Aorta (tissue), 5 donors: ENCODE measurements at regions of chr17 and their contacts with region 1.

Region 1: DNA sequence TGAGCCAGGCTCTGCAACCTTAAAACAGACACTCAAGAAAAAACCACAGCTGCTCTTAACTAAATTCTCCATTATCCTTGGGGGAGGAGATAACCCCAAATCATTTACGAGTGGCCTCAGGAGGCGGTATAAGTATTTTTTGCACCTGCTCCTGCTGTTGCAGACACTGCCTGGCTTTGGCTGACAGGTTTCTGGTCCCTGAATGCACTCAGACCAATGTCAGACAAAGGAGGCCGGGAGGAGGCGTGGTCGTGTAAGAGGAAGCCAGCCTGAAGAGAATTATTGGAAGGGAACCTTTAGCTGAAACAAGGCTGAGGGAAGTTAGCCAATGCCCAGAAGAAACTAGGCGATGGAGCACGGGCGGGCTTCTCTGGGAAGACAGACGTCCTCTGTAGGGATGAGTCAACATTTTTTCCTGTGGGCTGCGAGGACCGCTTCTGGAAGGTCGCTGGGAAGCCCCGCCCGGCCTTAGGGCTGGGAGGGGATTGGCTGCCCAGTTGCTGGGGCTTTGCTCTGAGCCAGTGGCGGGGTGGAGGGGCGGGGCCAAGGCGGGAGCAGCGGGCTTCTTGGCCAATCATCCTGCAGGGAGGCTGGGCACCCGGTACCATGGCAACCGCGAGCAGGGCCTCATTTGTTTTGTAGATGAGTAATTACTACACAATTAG is 82.3 kb downstream of the CCDC182 start:
- DNase-seq: peak; percentile 97 to 99
- ATAC-seq: peak; percentile 97
- H3K4me3 ChIP-seq: no peak overlapping the region
- H3K27ac ChIP-seq: peak overlapping the region in 1 of 2 donors; percentile 26
- H3K4me1 ChIP-seq: no peaks in the 10 kb centered on the region
- H3K27me3 ChIP-seq: no peaks in the 10 kb centered on the region

Region 2: DNA sequence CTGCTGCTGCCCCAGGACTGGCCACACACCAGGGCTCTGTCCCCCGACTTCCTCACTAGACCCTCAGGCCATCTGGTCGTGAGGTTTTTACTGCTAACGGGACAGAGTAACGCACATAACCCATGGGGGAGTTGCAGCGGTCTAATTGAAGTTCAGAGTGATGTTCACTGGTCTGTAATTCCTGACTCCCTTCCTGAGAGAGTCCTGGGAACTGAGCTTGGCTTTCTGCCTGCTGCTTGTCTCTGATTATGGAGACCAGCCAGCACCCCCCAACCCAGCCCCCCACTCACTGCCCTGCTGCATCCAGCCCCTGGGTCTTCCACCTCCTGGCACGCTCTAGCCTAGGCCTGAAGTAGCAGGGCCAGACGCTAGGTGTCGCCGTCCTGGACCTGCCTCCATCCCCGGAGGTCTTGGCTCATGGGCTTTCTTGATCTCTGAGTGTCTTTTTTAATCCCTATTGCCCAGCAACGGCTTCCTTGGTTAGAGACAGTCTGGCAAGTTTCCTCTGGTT is 110.6 kb before region 1 on chr17:
- intact Hi-C with region 1: loop called in 1 of 2 experiments (anchors 5 kb)
- DNase-seq: peak in 1 of 2 donors; percentile 85
- ATAC-seq: peak; percentile 69
- H3K4me3 ChIP-seq: no peak overlapping the region
- H3K27ac ChIP-seq: no peak overlapping the region
- H3K4me1 ChIP-seq: no peaks in the 10 kb centered on the region
- H3K27me3 ChIP-seq: no peaks in the 10 kb centered on the region